K562 (cell line): ENCODE measurements at regions of chr11 and their contacts with region 1.

Region 1: DNA sequence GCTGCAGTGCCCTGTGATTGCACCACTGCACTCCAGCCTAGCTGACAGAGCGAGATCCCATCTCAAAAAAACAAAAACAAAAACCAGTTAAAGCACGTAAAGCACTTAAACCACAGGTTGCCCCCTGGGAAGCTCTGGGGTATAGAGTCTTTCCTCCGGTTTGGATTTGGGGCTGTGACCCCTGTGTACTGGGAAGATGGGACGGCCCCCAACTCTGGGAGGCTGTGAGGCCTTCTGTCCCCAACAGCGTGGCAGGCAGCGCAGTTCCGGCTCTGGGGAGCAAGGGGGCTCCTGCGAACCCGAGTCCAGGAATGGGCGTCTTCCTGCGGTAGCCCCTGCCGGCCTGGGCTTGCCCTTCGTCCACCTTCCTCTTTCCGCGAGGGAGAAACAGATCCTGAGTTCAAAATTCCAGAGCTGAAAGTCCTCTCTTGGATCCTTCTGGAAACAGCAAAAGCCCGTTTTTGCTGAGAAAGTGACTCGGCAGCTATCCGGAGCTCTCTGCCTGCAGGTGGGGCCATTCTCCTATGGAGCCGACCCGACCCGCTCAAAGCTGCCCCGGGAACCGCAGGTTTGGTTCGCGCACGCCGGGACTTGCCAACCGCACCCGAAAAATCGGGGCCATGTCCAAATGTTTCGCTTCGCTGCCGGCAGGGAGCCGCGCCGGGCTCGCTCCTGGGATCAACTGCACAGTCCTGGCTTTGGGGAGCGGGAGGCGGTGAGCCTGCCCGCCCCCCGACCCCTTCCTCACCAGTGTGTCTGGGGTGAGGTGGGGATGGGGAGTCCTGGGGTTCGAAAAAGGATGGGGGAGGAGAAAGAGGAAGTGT is 36.3 kb upstream of the POLA2 start:
- DNase-seq: peak; percentile 73 to 80 (median 80)
- ATAC-seq: peak; percentile 95
- H3K4me3 ChIP-seq: peak overlapping the region; percentile 31
- H3K27ac ChIP-seq: peak overlapping the region; percentile 65
- H3K4me1 ChIP-seq: peaks cover 14 to 17% of the 10 kb centered on the region in 2 experiments
- H3K27me3 ChIP-seq: no peaks in the 10 kb centered on the region
- CTCF ChIP-seq: peak; percentile 70 to 85 (median 77)
- EP300 ChIP-seq: no peak
- POLR2A ChIP-seq: no peak
- RAD21 ChIP-seq: peak; percentile 69 to 72

Region 2: DNA sequence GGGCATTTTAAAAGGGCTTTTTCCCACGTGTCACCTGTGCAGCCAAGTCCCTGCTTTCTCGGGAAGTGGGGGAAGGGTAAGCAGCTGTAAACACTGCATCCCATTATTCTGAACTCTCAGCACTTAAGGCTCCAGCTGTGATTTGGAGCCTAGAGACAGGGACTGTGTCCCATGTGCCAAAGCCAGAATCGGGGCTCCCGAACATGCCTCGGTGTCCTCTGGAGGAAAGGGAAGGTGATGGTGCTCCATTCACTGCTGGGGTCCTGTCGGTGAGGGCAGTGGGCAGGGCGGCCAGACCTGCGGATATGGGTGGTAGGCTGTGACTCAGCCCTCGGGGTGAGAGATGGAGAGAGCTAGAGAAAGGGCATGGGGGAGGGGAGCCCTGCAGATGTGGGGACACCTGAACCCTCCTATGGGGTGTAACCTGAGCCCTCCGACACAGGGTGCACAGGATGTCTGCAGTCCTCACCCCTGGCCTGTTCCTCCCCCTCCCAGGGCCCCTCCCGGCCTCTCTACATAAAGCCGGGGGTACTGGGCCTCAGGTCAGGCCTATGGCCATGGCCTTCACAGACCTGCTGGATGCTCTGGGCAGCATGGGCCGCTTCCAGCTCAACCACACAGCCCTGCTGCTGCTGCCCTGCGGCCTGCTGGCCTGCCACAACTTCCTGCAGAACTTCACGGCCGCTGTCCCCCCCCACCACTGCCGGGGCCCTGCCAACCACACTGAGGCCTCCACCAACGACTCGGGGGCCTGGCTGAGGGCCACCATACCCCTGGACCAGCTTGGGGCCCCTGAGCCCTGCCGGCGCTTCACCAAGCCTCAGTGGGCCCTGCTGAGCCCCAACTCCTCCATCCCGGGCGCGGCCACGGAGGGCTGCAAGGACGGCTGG is 11.9 kb before region 1 on chr11:
- CTCF ChIA-PET with region 1: no interaction called
- POLR2A ChIA-PET with region 1: interaction called, 10 read pairs
- in situ Hi-C with region 1: no loop called
- intact Hi-C with region 1: no loop called
- DNase-seq: peak; percentile 17 to 52 (median 38)
- ATAC-seq: peak; percentile 32
- H3K4me3 ChIP-seq: no peak overlapping the region
- H3K27ac ChIP-seq: no peak overlapping the region
- H3K4me1 ChIP-seq: peaks cover 13 to 53% of the 10 kb centered on the region in 2 experiments; a peak in 4 of 5 replicates
- H3K27me3 ChIP-seq: no peaks in the 10 kb centered on the region
- CTCF ChIP-seq: no peak
- EP300 ChIP-seq: no peak
- POLR2A ChIP-seq: no peak
- RAD21 ChIP-seq: no peak

Region 3: GRCh38 chr11:65251476-65251875 is 26.0 kb after region 1 on chr11:
- CTCF ChIA-PET with region 1: interaction called, 10 read pairs
- POLR2A ChIA-PET with region 1: interaction called, 9 read pairs
- in situ Hi-C with region 1: no loop called
- intact Hi-C with region 1: loop called (anchors 1 kb)
- DNase-seq: no peak
- ATAC-seq: no peak
- H3K4me3 ChIP-seq: no peak overlapping the region
- H3K27ac ChIP-seq: no peak overlapping the region
- H3K4me1 ChIP-seq: no peaks in the 10 kb centered on the region; a peak in 1 of 5 replicates
- H3K27me3 ChIP-seq: no peaks in the 10 kb centered on the region
- CTCF ChIP-seq: no peak
- EP300 ChIP-seq: no peak
- POLR2A ChIP-seq: no peak
- RAD21 ChIP-seq: no peak